H1 (cell line): ENCODE measurements at regions of chr4 and their contacts with region 1.

Region 1: DNA sequence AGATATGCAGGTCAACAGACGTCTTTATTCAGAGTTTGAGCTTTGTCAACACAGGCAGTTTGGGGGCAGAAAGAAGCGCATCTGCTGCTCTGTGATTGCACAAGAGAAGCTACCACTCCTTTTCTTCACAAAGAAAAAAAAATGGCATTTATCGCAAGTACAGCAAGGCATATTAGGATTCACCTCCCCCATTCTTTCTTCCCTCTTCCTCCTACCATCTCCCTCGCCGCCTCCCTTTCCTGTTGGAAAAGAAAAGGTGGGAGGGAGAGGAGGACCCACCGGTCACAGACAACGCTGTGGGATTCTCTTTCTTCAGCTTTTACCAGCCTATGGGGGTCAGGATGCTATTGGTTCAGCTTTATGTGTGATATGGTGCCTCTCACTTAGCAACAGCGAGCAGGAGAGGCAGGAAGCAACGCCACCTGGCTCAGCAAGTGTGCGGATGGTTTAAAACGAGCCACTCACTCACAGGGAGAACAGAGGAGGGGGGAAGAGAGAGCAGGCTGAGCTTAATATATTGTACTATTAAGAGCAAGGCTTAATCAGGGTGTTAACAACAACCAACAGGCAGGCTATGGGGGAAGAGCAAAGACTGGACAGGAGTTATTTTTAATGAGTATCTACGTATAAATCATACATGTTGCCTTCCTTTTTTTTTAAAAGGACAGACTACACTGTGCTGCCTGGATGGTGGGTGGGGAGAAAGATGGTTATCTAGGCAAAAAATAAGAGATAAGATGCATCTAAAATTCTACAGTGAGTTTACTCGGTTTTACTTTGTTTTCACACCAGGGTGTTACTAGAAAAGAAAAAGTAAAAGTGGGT is 104.7 kb downstream of the MAML3 start:
- DNase-seq: peak in 1 of 2 experiments; percentile 55
- H3K4me3 ChIP-seq: peak overlapping the region; percentile 12 to 45 (median 23); a peak in 7 of 8 replicates
- H3K27ac ChIP-seq: peak overlapping the region; percentile 40; the same call in 1 of the 2 replicates
- H3K4me1 ChIP-seq: peaks cover 11 to 37% (median 12%) of the 10 kb centered on the region in 4 experiments
- H3K27me3 ChIP-seq: no peaks in the 10 kb centered on the region
- CTCF ChIP-seq: peak in 2 of 3 experiments; percentile 15 to 22; a peak in 2 of 4 replicates
- EP300 ChIP-seq: no peak
- POLR2A ChIP-seq: peak in 1 of 2 experiments; percentile 26; a peak in 1 of 3 replicates
- RAD21 ChIP-seq: peak; percentile 30 to 36

Region 2: GRCh38 chr4:140012688-140013486 is 36.3 kb before region 1 on chr4:
- CTCF ChIA-PET with region 1: interaction called, 37 read pairs
- POLR2A ChIA-PET with region 1: interaction called, 4 read pairs
- DNase-seq: peak in 1 of 2 experiments; percentile 70
- H3K4me3 ChIP-seq: no peak overlapping the region
- H3K27ac ChIP-seq: no peak overlapping the region
- H3K4me1 ChIP-seq: peaks cover 0 to 6% (median 1%) of the 10 kb centered on the region in 4 experiments; a peak in 2 of 7 replicates
- H3K27me3 ChIP-seq: no peaks in the 10 kb centered on the region
- CTCF ChIP-seq: peak in 2 of 3 experiments; percentile 78 to 79; a peak in 3 of 4 replicates
- EP300 ChIP-seq: no peak
- POLR2A ChIP-seq: no peak
- RAD21 ChIP-seq: peak; percentile 92 to 96

Region 3: GRCh38 chr4:140037357-140038030 is 11.7 kb before region 1 on chr4:
- CTCF ChIA-PET with region 1: interaction called, 23 read pairs
- POLR2A ChIA-PET with region 1: interaction called, 8 read pairs
- DNase-seq: no peak
- H3K4me3 ChIP-seq: no peak overlapping the region
- H3K27ac ChIP-seq: no peak overlapping the region
- H3K4me1 ChIP-seq: peaks cover 0 to 11% (median 4%) of the 10 kb centered on the region in 4 experiments; a peak in 3 of 7 replicates
- H3K27me3 ChIP-seq: no peaks in the 10 kb centered on the region
- CTCF ChIP-seq: no peak
- EP300 ChIP-seq: no peak
- POLR2A ChIP-seq: no peak
- RAD21 ChIP-seq: no peak

Region 4: GRCh38 chr4:140071806-140072205 is 22.6 kb after region 1 on chr4:
- CTCF ChIA-PET with region 1: interaction called, 13 read pairs
- POLR2A ChIA-PET with region 1: interaction called, 4 read pairs
- DNase-seq: no peak
- H3K4me3 ChIP-seq: no peak overlapping the region
- H3K27ac ChIP-seq: no peak overlapping the region
- H3K4me1 ChIP-seq: peaks cover 0 to 4% (median 1%) of the 10 kb centered on the region in 4 experiments; a peak in 3 of 7 replicates
- H3K27me3 ChIP-seq: no peaks in the 10 kb centered on the region
- CTCF ChIP-seq: no peak
- EP300 ChIP-seq: no peak
- POLR2A ChIP-seq: no peak
- RAD21 ChIP-seq: no peak

Region 5: GRCh38 chr4:140090215-140090731 is 41.0 kb after region 1 on chr4:
- CTCF ChIA-PET with region 1: interaction called, 20 read pairs
- POLR2A ChIA-PET with region 1: interaction called, 3 read pairs
- DNase-seq: no peak
- H3K4me3 ChIP-seq: no peak overlapping the region
- H3K27ac ChIP-seq: no peak overlapping the region
- H3K4me1 ChIP-seq: peaks cover 7 to 31% (median 22%) of the 10 kb centered on the region in 4 experiments
- H3K27me3 ChIP-seq: no peaks in the 10 kb centered on the region
- CTCF ChIP-seq: no peak
- EP300 ChIP-seq: no peak
- POLR2A ChIP-seq: no peak
- RAD21 ChIP-seq: no peak

Region 6: DNA sequence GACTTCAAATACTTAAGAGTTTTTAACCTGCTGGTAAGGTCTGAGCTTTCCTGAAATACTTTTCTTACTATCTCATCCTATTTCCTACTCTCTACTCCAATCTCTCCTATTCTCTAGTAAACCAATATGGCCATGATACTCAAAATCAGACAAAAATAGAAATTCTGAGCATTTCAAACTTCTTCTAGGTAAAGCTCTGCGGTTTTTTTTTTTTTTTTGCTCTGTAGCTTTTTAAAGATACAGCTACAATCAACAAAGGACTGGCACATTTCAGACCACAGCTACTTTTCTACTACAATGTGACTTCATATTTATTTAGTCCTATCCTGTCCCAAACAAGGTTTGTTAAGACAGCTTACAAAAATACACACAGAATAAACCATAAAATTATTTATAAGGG is 73.7 kb after region 1 on chr4:
- CTCF ChIA-PET with region 1: no interaction called
- POLR2A ChIA-PET with region 1: no interaction called
- DNase-seq: no peak
- H3K4me3 ChIP-seq: no peak overlapping the region
- H3K27ac ChIP-seq: no peak overlapping the region
- H3K4me1 ChIP-seq: peaks cover 0 to 3% (median 0%) of the 10 kb centered on the region in 4 experiments; a peak in 2 of 7 replicates
- H3K27me3 ChIP-seq: no peaks in the 10 kb centered on the region
- CTCF ChIP-seq: no peak
- EP300 ChIP-seq: no peak
- POLR2A ChIP-seq: no peak
- RAD21 ChIP-seq: no peak

Region 7: DNA sequence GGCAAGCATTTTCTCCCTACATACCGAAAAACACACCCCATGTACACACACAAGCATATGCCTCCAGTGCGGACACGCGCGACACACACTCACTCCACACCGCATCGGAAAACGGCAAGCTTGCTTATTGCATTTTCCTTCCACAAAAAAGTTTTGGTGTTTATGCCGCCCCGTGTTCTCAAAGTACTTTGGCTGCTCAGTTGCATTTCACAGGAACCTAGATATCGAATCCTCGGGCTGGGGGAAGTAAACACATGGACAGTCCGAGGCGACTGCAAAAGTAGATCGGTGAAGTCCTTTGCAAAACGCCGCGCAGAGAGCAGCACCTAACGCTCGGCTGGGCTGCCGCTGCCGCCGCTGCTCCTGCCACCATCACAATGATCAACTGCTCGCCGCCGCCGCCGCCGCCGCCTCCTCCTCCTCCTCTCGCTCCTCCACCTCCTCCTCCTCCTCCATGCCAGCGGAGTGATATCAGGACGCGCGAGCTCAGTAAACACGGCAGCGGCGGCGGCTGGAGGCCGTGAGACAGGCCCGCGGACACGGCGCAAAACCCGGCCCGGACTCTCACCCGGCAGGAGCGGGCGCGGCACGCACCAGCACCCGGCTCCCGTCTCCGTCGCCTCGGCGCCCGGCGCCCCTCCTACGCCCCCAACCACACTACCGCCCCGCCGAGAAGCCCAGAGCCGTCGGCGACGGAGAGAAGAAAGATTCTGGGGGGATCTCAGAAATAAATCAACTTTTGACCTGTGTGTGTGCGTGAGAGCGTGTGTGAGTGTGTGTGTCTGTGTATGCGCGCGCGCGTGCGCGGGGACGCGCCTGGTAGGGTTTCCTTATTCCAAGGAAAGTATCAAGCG is 104.7 kb after region 1 on chr4 and contains the start of gene MAML3:
- CTCF ChIA-PET with region 1: interaction called, 13 read pairs
- POLR2A ChIA-PET with region 1: interaction called, 17 read pairs
- DNase-seq: peak; percentile 47 to 94
- H3K4me3 ChIP-seq: peak within 1 kb of the TSS; percentile 86 to 98 (median 94)
- H3K27ac ChIP-seq: no peak within 1 kb of the TSS
- H3K4me1 ChIP-seq: peaks cover 0 to 4% (median 2%) of the 10 kb centered on the region in 4 experiments; a peak in 4 of 7 replicates
- H3K27me3 ChIP-seq: peaks cover 0 to 3% (median 1%) of the 10 kb centered on the region in 4 experiments; a peak in 3 of 7 replicates
- CTCF ChIP-seq: no peak
- EP300 ChIP-seq: peak in 1 of 2 experiments; percentile 64; a peak in 1 of 3 replicates
- POLR2A ChIP-seq: no peak
- RAD21 ChIP-seq: peak in 1 of 2 experiments; percentile 37; a peak in 2 of 4 replicates
- total RNA-seq, gene MAML3: 5.6 and 5.7 TPM in 2 replicates